ENCODE measurements at regions of chr5 and their contacts with region 1.

Region 1: GRCh38 chr5:57173185-57174127 is at the start of gene GPBP1:
- DNase-seq: peak; percentile 97 to 99 (median 99)
- H3K4me3 ChIP-seq: peak within 1 kb of the TSS; percentile 95
- H3K4me3 Mint-ChIP-seq: peak within 1 kb of the TSS; percentile 91 to 100 (median 98)
- H3K27ac ChIP-seq: peak within 1 kb of the TSS; percentile 97
- H3K27ac Mint-ChIP-seq: peak within 1 kb of the TSS; percentile 95 to 100 (median 99)
- H3K4me1 ChIP-seq: peaks cover 29% of the 10 kb centered on the region
- H3K4me1 Mint-ChIP-seq: peaks cover 38 to 50% (median 48%) of the 10 kb centered on the region in 3 donors
- H3K27me3 ChIP-seq: no peaks in the 10 kb centered on the region
- H3K27me3 Mint-ChIP-seq: no peaks in the 10 kb centered on the region
- total RNA-seq, gene GPBP1: 77.7 to 81.9 TPM

Region 2: GRCh38 chr5:56909294-56910209 is 263.9 kb before region 1 on chr5 and contains the start of gene SETD9:
- CTCF ChIA-PET with region 1: no interaction called
- POLR2A ChIA-PET with region 1: interaction called, 20 read pairs
- DNase-seq: peak; percentile 79 to 90 (median 84)
- H3K4me3 ChIP-seq: peak within 1 kb of the TSS; percentile 78
- H3K4me3 Mint-ChIP-seq: peak within 1 kb of the TSS; percentile 88 to 98 (median 94)
- H3K27ac ChIP-seq: peak within 1 kb of the TSS; percentile 82
- H3K27ac Mint-ChIP-seq: peak within 1 kb of the TSS; percentile 77 to 93 (median 91)
- H3K4me1 ChIP-seq: peaks cover 8% of the 10 kb centered on the region
- H3K4me1 Mint-ChIP-seq: peaks cover 15 to 21% (median 19%) of the 10 kb centered on the region in 3 donors
- H3K27me3 ChIP-seq: no peaks in the 10 kb centered on the region
- H3K27me3 Mint-ChIP-seq: peaks cover 0 to 1% of the 10 kb centered on the region in 2 donors
- total RNA-seq, gene SETD9: 13.9 to 15.0 TPM

Region 3: DNA sequence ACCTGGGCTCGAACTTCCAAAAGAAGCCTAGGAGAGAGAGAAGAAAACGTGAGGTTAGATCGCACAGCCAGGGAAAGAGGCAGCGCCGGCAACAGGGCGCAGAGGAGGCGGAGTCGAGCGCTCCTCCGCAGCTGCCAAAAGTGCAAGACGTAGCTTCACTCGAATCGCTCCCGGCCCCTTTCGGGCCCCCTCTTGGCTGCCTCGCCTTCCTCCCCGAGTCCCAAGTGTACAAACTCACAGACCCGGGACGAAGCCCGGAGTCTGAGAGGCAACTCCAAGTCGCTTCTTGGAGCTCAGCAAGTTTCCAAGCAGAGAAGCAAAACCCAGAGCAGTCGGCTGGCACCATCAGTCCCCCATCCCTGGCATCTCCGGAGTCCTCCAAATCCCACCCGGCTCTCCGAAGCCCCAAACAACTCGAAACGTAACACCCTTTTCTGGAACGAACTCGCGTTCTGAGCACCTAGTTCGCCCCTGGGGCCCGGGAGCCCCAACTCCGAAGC is 222.8 kb before region 1 on chr5:
- CTCF ChIA-PET with region 1: no interaction called
- POLR2A ChIA-PET with region 1: interaction called, 11 read pairs
- DNase-seq: peak; percentile 30 to 62 (median 38)
- H3K4me3 ChIP-seq: peak overlapping the region; percentile 74
- H3K4me3 Mint-ChIP-seq: peak overlapping the region; percentile 87 to 99 (median 95)
- H3K27ac ChIP-seq: peak overlapping the region; percentile 28
- H3K27ac Mint-ChIP-seq: peak overlapping the region; percentile 83 to 93 (median 92)
- H3K4me1 ChIP-seq: peaks cover 16% of the 10 kb centered on the region
- H3K4me1 Mint-ChIP-seq: peaks cover 23 to 35% (median 30%) of the 10 kb centered on the region in 3 donors
- H3K27me3 ChIP-seq: peaks cover 17% of the 10 kb centered on the region
- H3K27me3 Mint-ChIP-seq: peaks cover 14 to 24% of the 10 kb centered on the region in 2 donors

Measured in CD8-positive, alpha-beta memory T cell (primary cell).